ENCODE measurements at regions of chr4 and their contacts with region 1.

Region 1: DNA sequence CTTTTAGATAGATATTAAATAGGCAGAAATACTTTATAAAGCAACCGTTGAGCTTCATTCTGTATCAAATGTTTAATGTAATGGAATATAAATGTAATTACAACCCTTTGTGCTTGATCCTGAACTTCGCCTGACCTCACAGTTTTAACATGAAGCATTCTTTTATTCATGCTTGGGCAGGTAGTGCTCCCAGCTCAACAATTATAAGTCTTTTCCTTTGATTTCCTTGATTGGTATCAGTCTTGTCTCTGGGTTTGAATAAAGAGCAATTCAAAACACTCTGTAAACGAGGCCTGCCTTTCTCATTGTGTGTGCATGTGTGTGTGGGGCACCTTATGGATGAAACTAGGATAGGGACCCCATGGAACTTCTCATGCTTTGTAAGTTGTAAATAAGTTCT is 6.8 kb downstream of the METAP1 start:
- DNase-seq: no peak
- ATAC-seq: no peak
- H3K4me3 ChIP-seq: no peak overlapping the region
- H3K4me3 Mint-ChIP-seq: no peak overlapping the region
- H3K27ac ChIP-seq: no peak overlapping the region
- H3K27ac Mint-ChIP-seq: peak overlapping the region in 2 of 9 donors; percentile 26 to 61
- H3K4me1 ChIP-seq: peaks cover 0 to 4% of the 10 kb centered on the region in 2 donors
- H3K4me1 Mint-ChIP-seq: peaks cover 30 to 94% (median 76%) of the 10 kb centered on the region in 7 donors
- H3K27me3 ChIP-seq: no peaks in the 10 kb centered on the region
- H3K27me3 Mint-ChIP-seq: no peaks in the 10 kb centered on the region

Region 2: DNA sequence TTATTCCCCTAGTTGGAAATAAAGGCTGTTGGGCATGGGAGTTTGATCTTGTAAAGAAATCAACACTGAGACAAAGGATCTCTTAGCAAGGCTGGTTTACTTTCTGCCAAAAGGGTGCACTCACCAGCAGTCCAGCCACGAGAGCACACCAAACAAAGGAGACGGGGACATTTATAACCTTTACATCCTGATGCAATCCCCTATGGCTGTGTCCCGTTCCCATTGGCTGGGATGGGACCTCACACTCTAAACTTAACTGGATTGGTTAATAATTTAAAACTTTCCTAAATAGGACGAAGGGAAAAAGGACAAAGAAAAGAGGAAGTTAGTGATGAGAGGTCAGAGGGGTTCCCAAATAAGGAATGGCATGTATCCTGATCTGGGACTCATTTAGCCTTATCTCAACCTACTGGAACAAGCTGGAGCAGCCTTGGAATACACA is 11.1 kb after region 1 on chr4:
- CTCF ChIA-PET with region 1: no interaction called
- POLR2A ChIA-PET with region 1: no interaction called
- intact Hi-C with region 1: loop called in 1 of 2 experiments (anchors 1 kb)
- DNase-seq: no peak
- ATAC-seq: no peak
- H3K4me3 ChIP-seq: no peak overlapping the region
- H3K4me3 Mint-ChIP-seq: no peak overlapping the region
- H3K27ac ChIP-seq: no peak overlapping the region
- H3K27ac Mint-ChIP-seq: no peak overlapping the region
- H3K4me1 ChIP-seq: no peaks in the 10 kb centered on the region
- H3K4me1 Mint-ChIP-seq: peaks cover 4 to 64% (median 41%) of the 10 kb centered on the region in 7 donors
- H3K27me3 ChIP-seq: no peaks in the 10 kb centered on the region
- H3K27me3 Mint-ChIP-seq: no peaks in the 10 kb centered on the region

Region 3: GRCh38 chr4:99028187-99028586 is 25.9 kb after region 1 on chr4:
- CTCF ChIA-PET with region 1: no interaction called
- POLR2A ChIA-PET with region 1: interaction called, 10 read pairs
- intact Hi-C with region 1: no loop called
- DNase-seq: no peak
- ATAC-seq: no peak
- H3K4me3 ChIP-seq: no peak overlapping the region
- H3K4me3 Mint-ChIP-seq: no peak overlapping the region
- H3K27ac ChIP-seq: no peak overlapping the region
- H3K27ac Mint-ChIP-seq: peak overlapping the region in 2 of 9 donors; percentile 12 to 41
- H3K4me1 ChIP-seq: no peaks in the 10 kb centered on the region
- H3K4me1 Mint-ChIP-seq: peaks cover 42 to 81% (median 75%) of the 10 kb centered on the region in 7 donors
- H3K27me3 ChIP-seq: no peaks in the 10 kb centered on the region
- H3K27me3 Mint-ChIP-seq: no peaks in the 10 kb centered on the region

Measured in naive thymus-derived CD4-positive, alpha-beta T cell (primary cell).